Activated T-helper 2 cell treated with anti-CD3 and anti-CD28 coated beads, Interferon-gamma antibody, Interleukin-2, Interleukin-4, amounts not matched to agents 10 μg/mL and 5 μg/mL and 100 μg/mL, durations not matched to agents 14 hours and 24 hours and 36 hours (primary cell): ENCODE measurements at regions of chr12 and their contacts with region 1.

Region 1: GRCh38 chr12:46217541-46218321 is 51.1 kb downstream of the SLC38A1 start:
- DNase-seq: peak; percentile 53
- H3K4me3 Mint-ChIP-seq: peak overlapping the region; percentile 67
- H3K27ac Mint-ChIP-seq: peak overlapping the region; percentile 99
- H3K4me1 Mint-ChIP-seq: peaks cover 88% of the 10 kb centered on the region
- H3K27me3 Mint-ChIP-seq: no peaks in the 10 kb centered on the region

Region 2: GRCh38 chr12:45728630-45729232 is 489.0 kb before region 1 on chr12:
- intact Hi-C with region 1: loop called (anchors 5 kb)
- DNase-seq: peak; percentile 96
- H3K4me3 Mint-ChIP-seq: peak overlapping the region; percentile 100
- H3K27ac Mint-ChIP-seq: peak overlapping the region; percentile 100
- H3K4me1 Mint-ChIP-seq: peaks cover 31% of the 10 kb centered on the region
- H3K27me3 Mint-ChIP-seq: no peaks in the 10 kb centered on the region

Region 3: DNA sequence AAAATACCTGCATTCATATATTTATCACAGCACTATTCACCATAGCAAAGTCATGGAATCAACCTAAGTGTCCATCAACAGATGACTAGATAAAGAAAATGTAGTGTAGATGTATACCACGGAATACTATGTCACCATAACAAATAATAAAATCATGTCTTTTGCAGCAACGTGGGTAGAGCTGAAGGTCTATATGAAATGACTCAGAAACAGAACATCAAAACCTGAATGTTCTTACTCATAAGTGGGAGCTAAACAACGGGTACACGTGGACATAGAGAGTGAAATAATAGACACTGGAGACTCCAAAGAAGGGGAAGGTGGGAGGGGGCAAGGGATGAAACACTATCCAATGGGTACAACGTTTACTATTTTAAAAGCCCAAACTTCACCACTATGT is 13.3 kb after region 1 on chr12:
- intact Hi-C with region 1: loop called (anchors 1 kb)
- DNase-seq: no peak
- H3K4me3 Mint-ChIP-seq: no peak overlapping the region
- H3K27ac Mint-ChIP-seq: peak overlapping the region; percentile 42
- H3K4me1 Mint-ChIP-seq: peaks cover 47% of the 10 kb centered on the region
- H3K27me3 Mint-ChIP-seq: no peaks in the 10 kb centered on the region

Region 4: GRCh38 chr12:46459861-46460545 is 242.3 kb after region 1 on chr12:
- intact Hi-C with region 1: loop called (anchors 1 kb)
- DNase-seq: no peak
- H3K4me3 Mint-ChIP-seq: peak overlapping the region; percentile 80
- H3K27ac Mint-ChIP-seq: peak overlapping the region; percentile 96
- H3K4me1 Mint-ChIP-seq: peaks cover 54% of the 10 kb centered on the region
- H3K27me3 Mint-ChIP-seq: no peaks in the 10 kb centered on the region

Region 5: DNA sequence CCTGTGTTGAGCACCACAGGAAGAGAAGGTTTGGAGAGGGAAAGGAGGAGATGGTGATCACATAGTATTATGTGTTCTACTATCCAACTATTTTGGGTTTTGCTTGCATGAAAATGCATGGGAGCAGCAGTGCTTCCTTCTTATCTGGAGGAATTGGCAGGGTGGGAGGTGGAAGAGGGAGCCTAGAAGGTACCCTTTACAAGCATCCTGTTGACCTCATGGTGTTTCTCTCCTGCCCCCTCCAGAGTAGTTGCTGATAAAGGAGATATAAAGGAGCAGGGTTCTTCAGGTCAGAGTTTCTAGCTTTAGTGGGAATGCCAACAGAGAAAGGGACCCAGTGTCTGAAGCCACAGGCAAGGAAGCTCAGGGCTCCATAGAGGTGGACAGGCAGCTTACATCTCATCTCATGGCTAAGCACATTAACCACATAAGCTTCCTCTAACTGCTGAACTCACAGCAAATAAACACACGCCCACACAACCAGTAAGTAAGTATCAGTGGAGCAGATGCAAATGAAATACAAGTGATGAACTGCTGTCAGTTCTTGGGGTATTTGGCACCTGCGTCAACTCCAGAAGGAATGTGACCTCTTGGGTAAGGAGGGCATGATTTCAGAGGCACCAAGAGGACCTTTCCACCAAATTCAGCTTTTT is 329.0 kb after region 1 on chr12:
- intact Hi-C with region 1: loop called (anchors 5 kb)
- DNase-seq: peak; percentile 22
- H3K4me3 Mint-ChIP-seq: peak overlapping the region; percentile 28
- H3K27ac Mint-ChIP-seq: peak overlapping the region; percentile 76
- H3K4me1 Mint-ChIP-seq: peaks cover 62% of the 10 kb centered on the region
- H3K27me3 Mint-ChIP-seq: no peaks in the 10 kb centered on the region

Region 6: DNA sequence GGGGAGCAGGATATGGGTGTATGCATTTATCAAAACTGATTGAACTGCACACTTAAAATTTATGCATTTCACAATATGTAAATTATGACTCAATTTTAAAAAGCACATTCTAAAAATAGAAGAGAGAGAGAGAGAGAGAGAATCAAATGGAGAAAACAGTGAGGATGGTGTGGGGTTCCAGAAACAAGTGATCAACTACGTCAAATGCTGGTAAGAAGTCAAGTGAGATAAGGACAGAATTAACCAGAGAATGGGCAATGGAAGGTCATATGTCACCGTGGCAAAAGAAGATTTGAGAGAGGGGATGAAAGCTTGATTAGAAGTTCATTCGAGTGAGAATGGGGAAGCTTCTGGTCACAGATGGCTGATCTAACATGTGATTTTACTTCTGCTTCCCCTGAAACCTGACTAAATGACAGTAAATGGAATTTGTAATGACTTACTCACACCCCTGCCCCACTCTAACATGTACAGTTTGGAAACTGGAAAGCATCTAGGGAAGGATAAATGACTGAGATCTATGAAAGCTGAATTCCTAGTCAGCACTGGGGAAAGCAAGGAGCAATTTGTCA is 1138.5 kb after region 1 on chr12:
- intact Hi-C with region 1: loop called (anchors 2 kb)
- DNase-seq: no peak
- H3K4me3 Mint-ChIP-seq: peak overlapping the region; percentile 45
- H3K27ac Mint-ChIP-seq: peak overlapping the region; percentile 96
- H3K4me1 Mint-ChIP-seq: peaks cover 67% of the 10 kb centered on the region
- H3K27me3 Mint-ChIP-seq: no peaks in the 10 kb centered on the region

Region 7: DNA sequence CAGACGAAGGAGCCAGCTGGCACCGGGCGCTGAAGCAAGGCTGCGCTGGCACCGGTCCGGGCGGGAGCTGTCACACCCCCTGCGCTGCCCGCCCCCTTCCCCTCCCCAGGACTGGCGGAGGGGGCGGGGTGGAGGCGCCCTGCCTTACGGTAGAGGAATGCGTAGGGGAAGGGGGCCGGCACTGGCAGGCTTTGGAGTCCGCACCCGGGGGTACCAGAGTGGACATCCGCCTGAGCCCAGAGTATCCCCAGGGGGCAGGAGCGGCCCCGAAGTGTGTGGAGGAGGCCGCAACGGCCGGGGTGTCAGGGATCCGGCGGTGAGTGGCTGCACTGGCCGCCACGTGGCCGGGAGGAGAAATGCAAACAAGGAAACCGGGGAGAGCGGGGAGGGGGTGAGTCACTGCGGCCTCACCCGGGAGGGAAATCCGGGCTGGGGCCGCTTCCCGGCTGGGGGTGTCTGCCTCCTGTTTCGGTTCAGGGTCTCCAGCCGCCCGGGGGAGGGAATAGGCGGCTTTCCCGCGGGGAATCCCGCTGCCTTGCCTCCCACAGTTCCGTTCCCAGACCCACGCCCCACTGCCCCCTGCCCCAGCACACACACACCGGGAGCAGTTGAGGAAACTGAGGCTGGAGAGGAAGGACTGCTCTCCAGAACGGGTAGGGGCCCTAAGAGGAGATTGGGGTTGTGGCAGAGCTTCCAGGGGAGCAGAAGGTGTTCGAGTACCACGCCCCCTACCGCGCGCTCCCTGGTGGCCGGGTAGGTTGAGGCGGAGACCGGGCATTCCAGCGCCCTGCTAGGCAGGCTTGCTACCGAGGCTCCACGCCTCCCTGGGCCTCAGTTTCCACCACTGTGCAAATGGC is 1541.3 kb after region 1 on chr12 and contains the start of gene RAPGEF3:
- intact Hi-C with region 1: loop called (anchors 5 kb)
- DNase-seq: peak; percentile 62
- H3K4me3 Mint-ChIP-seq: peak within 1 kb of the TSS; percentile 75
- H3K27ac Mint-ChIP-seq: no peak within 1 kb of the TSS
- H3K4me1 Mint-ChIP-seq: peaks cover 34% of the 10 kb centered on the region
- H3K27me3 Mint-ChIP-seq: peaks cover 7% of the 10 kb centered on the region
- total RNA-seq, gene RAPGEF3: 1.8 and 2.7 TPM in 2 replicates